Ovary (tissue), 10 donors: ENCODE measurements at regions of chr4 and their contacts with region 1.

Region 1: GRCh38 chr4:73653695-73654106 is 33.5 kb upstream of the RASSF6 start:
- DNase-seq: peak in 2 of 5 donors; percentile 20 to 41
- H3K4me3 ChIP-seq: no peak overlapping the region
- H3K27ac ChIP-seq: no peak overlapping the region
- H3K4me1 ChIP-seq: no peaks in the 10 kb centered on the region
- H3K27me3 ChIP-seq: no peaks in the 10 kb centered on the region
- CTCF ChIP-seq: peak in 2 of 3 donors; percentile 45 to 55
- EP300 ChIP-seq: no peak
- POLR2A ChIP-seq: no peak

Region 2: DNA sequence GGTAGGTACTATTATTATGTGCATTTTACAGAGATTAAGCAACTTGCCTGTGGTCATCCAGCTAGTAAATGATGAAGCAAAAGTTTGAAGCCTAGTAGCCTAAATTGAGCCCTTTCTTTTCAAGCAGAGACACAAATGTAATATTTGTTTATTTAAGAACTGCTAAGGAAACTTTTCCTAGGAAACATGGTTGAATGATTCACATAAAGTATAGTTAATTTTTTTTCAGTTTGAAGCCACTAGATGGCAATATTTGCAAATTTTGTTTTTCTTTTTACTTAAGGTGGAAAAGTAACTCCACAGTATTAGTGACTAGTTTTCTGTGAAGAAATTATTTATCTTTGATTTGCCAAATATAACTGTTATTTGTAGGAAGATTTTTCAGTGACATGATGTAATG is 342.3 kb before region 1 on chr4:
- intact Hi-C with region 1: loop called in 1 of 4 experiments (anchors 10 kb)
- DNase-seq: no peak
- H3K4me3 ChIP-seq: no peak overlapping the region
- H3K27ac ChIP-seq: no peak overlapping the region
- H3K4me1 ChIP-seq: no peaks in the 10 kb centered on the region
- H3K27me3 ChIP-seq: no peaks in the 10 kb centered on the region
- CTCF ChIP-seq: no peak
- EP300 ChIP-seq: no peak
- POLR2A ChIP-seq: no peak

Region 3: DNA sequence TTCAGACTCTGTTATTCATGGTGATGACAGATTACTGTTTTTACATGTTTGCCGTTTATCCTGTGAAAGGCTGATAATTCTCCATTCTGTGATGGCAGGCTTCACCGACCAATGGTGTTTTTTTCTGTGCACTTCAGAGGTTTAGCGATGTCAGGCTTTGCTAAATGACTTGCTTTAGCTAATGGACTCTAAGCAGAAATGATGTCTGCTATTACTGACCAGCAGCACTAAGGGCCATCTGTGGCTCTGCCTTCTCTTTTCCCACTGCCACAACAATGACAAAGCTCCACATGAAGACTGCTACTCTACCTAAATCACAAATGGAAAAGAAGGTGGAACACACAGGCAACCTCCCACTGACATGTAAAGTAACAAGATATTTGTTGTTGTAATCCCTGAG is 318.0 kb before region 1 on chr4:
- intact Hi-C with region 1: loop called in 3 of 4 experiments (anchors 5 to 10 kb)
- DNase-seq: no peak
- H3K4me3 ChIP-seq: no peak overlapping the region
- H3K27ac ChIP-seq: no peak overlapping the region
- H3K4me1 ChIP-seq: no peaks in the 10 kb centered on the region
- H3K27me3 ChIP-seq: no peaks in the 10 kb centered on the region
- CTCF ChIP-seq: no peak
- EP300 ChIP-seq: no peak
- POLR2A ChIP-seq: no peak

Region 4: GRCh38 chr4:73341454-73341853 is 312.2 kb before region 1 on chr4:
- intact Hi-C with region 1: loop called in 2 of 4 experiments (anchors 5 to 10 kb)
- DNase-seq: peak; percentile 16 to 36 (median 25)
- H3K4me3 ChIP-seq: no peak overlapping the region
- H3K27ac ChIP-seq: no peak overlapping the region
- H3K4me1 ChIP-seq: no peaks in the 10 kb centered on the region
- H3K27me3 ChIP-seq: no peaks in the 10 kb centered on the region
- CTCF ChIP-seq: peak in 2 of 3 donors; percentile 31 to 36
- EP300 ChIP-seq: no peak
- POLR2A ChIP-seq: no peak

Region 5: DNA sequence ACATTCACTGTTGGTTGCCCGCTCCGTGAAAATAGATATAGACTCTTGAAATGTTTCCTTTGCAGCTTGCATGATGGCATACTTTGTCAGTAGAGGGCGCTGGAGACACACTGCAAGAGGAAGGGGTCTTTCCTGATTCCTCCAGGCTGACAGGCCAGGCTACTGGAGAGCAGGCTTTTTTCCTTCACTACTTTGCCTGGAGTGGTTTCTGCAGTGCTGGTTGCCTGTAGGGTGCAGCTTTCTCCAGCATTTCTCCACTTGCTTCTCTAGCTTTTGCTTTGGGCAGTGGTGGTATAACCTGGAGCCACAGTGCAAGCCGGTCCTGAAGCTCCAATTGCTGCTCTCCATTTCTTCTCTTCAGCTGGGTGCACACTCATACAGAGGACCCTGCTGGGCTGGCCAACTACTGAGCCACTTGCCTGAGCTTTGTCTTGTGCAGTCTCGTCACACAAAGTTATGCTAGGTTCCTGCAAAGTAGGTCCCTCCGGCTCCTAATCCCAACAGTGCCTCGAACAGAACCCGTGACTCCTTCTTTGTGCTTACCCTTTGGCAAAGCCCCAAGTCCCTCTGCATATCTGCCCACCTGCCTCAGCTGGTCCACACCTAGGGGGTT is 79.8 kb before region 1 on chr4:
- intact Hi-C with region 1: loop called in 3 of 4 experiments (anchors 5 to 10 kb)
- DNase-seq: peak; percentile 54 to 66 (median 62)
- H3K4me3 ChIP-seq: no peak overlapping the region
- H3K27ac ChIP-seq: no peak overlapping the region
- H3K4me1 ChIP-seq: no peaks in the 10 kb centered on the region
- H3K27me3 ChIP-seq: no peaks in the 10 kb centered on the region
- CTCF ChIP-seq: peak in 2 of 3 donors; percentile 41 to 51
- EP300 ChIP-seq: no peak
- POLR2A ChIP-seq: no peak

Region 6: DNA sequence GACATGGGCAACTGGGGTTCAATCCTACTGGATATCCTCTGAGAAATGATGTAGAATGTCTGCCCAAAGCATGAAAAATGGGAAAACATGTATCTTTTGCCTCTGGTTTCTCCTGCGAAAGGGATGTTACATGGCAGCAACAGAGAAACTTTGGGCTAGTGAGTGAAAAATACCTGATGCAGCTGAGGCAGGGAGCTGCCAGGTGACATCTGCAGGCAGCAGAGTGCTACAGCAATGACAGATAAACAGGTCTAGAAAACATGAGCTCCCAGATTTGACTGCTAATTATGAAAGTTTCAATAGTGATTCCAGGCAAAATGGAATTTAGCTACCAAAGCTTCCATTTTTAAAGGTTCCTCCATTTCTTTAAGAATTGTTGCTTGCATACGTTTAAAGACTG is 210.7 kb after region 1 on chr4:
- intact Hi-C with region 1: loop called in 1 of 4 experiments (anchors 5 kb)
- DNase-seq: no peak
- H3K4me3 ChIP-seq: no peak overlapping the region
- H3K27ac ChIP-seq: no peak overlapping the region
- H3K4me1 ChIP-seq: peaks cover 1% of the 10 kb centered on the region
- H3K27me3 ChIP-seq: no peaks in the 10 kb centered on the region
- CTCF ChIP-seq: no peak
- EP300 ChIP-seq: no peak
- POLR2A ChIP-seq: no peak